Heart right ventricle (tissue), 16 donors: ENCODE measurements at regions of chr13 and their contacts with region 1.

Region 1: DNA sequence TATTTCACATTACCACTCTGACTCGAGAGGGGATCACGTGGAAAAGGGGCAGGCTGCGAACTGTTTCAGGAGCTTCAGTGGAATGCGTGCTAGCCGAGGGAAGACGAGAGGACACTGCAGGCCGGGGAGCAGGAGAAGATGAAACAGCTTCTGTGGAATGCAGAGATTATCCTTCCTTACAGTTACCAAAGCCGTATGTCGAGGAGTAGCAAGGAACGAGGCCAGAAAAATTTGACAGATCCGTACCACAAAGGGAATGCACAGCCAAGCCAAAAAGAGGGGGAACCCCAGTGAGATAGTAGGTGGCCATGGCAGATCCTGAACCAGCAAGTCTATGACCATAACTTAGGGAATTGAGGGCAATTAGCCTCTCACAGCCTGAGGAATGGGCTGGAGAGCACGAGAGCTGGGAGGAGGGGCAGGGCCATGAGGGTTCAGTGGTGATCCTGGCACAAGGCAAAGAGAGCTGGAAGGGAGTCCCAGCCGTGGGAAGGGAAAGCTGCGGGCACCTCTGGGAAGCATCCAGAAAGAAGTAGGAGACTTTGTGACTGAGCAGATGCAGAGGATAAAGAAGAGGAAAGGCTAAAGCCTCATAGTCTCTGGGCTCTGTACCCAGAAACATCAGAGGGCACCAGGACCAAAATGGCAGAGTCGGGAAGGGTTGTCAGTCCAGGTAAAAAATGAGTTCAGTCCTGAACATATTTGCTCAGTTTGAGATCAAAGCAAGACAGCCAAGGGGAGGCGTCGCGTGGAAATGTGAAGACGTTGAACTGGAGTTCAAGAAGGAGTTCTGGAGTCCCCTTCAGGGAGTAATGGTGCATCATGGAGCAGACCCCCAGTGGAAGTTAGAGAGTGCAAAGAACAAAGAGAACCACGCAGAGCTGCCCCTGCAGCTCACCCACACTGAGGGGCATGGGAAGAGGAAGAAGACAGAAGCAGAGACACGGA is 5.1 kb downstream of the COL4A1 start:
- DNase-seq: no peak
- ATAC-seq: peak in 1 of 8 donors; percentile 4
- H3K4me3 ChIP-seq: peak overlapping the region in 2 of 10 donors; percentile 4 to 14
- H3K27ac ChIP-seq: peak overlapping the region; percentile 5 to 98 (median 70)
- H3K4me1 ChIP-seq: peaks cover 37 to 94% (median 86%) of the 10 kb centered on the region in 9 donors
- H3K27me3 ChIP-seq: peaks cover 0 to 65% (median 0%) of the 10 kb centered on the region in 7 donors
- CTCF ChIP-seq: no peak

Region 2: GRCh38 chr13:110225609-110226562 is 76.0 kb before region 1 on chr13:
- intact Hi-C with region 1: loop called in 7 of 10 experiments (anchors 2 to 10 kb)
- DNase-seq: no peak
- ATAC-seq: no peak
- H3K4me3 ChIP-seq: no peak overlapping the region
- H3K27ac ChIP-seq: peak overlapping the region in 9 of 10 donors; percentile 15 to 76 (median 52)
- H3K4me1 ChIP-seq: peaks cover 5 to 90% (median 63%) of the 10 kb centered on the region in 9 donors
- H3K27me3 ChIP-seq: no peaks in the 10 kb centered on the region
- CTCF ChIP-seq: no peak

Region 3: GRCh38 chr13:110233181-110233950 is 68.5 kb before region 1 on chr13:
- intact Hi-C with region 1: loop called in 6 of 10 experiments (anchors 5 to 10 kb)
- DNase-seq: peak; percentile 29 to 78
- ATAC-seq: peak in 7 of 8 donors; percentile 31 to 66 (median 55)
- H3K4me3 ChIP-seq: peak overlapping the region in 4 of 10 donors; percentile 14 to 36 (median 26)
- H3K27ac ChIP-seq: peak overlapping the region; percentile 68 to 89 (median 80)
- H3K4me1 ChIP-seq: peaks cover 40 to 95% (median 86%) of the 10 kb centered on the region in 9 donors
- H3K27me3 ChIP-seq: no peaks in the 10 kb centered on the region
- CTCF ChIP-seq: no peak

Region 4: GRCh38 chr13:110265682-110266430 is 36.0 kb before region 1 on chr13:
- intact Hi-C with region 1: loop called in 5 of 10 experiments (anchors 5 kb)
- DNase-seq: peak; percentile 60 to 62
- ATAC-seq: peak in 5 of 8 donors; percentile 19 to 32 (median 20)
- H3K4me3 ChIP-seq: peak overlapping the region in 3 of 10 donors; percentile 12 to 23 (median 19)
- H3K27ac ChIP-seq: peak overlapping the region; percentile 52 to 82 (median 62)
- H3K4me1 ChIP-seq: peaks cover 31 to 100% (median 95%) of the 10 kb centered on the region in 9 donors
- H3K27me3 ChIP-seq: no peaks in the 10 kb centered on the region
- CTCF ChIP-seq: no peak

Region 5: GRCh38 chr13:110455941-110456340 is 154.1 kb after region 1 on chr13:
- intact Hi-C with region 1: no loop called
- DNase-seq: peak; percentile 64 to 74
- ATAC-seq: peak; percentile 79 to 92 (median 88)
- H3K4me3 ChIP-seq: no peak overlapping the region
- H3K27ac ChIP-seq: peak overlapping the region in 1 of 10 donors; percentile 10
- H3K4me1 ChIP-seq: peaks cover 0 to 12% (median 5%) of the 10 kb centered on the region in 9 donors
- H3K27me3 ChIP-seq: no peaks in the 10 kb centered on the region
- CTCF ChIP-seq: peak; percentile 55 to 89 (median 80)